Adrenal gland (tissue), 19 donors: ENCODE measurements at regions of chr9 and their contacts with region 1.

Region 1: DNA sequence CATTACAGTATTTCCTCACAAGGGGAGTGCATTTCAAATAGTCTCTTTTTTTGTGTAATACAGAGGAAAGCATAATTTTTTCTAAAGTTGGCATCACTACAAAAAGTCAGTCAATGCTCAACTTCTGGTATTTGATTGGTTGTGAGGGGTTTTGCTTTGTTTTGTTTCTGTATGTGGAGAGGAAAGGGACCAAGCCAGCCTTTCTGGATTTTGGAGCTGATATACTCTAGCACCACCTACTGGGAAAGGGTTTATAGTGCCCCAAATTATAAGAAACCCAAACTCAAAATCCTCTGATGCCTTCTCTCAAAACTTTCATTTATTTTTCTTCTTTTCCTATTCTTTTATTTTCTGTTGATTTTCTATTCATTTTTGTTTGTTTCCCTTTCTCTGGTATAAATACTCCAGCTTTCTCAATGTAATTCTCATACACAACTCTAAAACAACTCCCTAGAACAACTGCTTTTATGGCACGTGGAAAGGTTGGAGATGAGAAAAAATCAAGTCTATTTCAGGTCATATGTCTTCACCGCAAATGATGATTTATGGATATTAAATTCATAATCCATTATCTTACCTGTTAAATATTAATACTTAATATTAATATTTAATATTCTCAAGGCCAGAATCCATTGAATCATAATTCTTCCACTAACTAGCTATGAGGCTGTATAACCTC is 69.5 kb upstream of the ANXA1 start:
- DNase-seq: peak in 3 of 7 donors; percentile 21 to 26 (median 26)
- H3K4me3 ChIP-seq: no peak overlapping the region
- H3K27ac ChIP-seq: no peak overlapping the region
- H3K4me1 ChIP-seq: no peaks in the 10 kb centered on the region
- H3K27me3 ChIP-seq: no peaks in the 10 kb centered on the region
- CTCF ChIP-seq: peak; percentile 63 to 85 (median 74)
- POLR2A ChIP-seq: no peak

Region 2: DNA sequence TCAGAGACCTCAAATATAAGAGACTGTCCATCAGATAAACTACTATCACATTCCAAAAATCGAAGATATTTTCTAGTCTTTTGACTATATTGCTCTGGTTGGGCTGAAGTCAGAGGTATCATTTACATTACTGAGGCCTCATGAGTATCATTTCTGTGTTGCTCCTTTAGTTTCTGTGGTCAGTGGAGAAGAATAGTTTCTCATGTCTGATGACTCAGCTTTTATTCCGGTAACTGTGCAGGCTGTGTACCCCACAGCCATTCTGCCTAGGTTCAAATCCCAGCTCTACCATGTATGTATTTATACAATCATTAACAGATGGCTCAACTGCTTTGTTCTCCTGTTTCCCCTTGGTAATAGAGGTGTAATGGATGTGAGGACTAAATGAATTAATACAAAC is 308.5 kb before region 1 on chr9:
- intact Hi-C with region 1: no loop called
- DNase-seq: no peak
- H3K4me3 ChIP-seq: no peak overlapping the region
- H3K27ac ChIP-seq: no peak overlapping the region
- H3K4me1 ChIP-seq: no peaks in the 10 kb centered on the region
- H3K27me3 ChIP-seq: no peaks in the 10 kb centered on the region
- CTCF ChIP-seq: no peak
- POLR2A ChIP-seq: no peak

Region 3: DNA sequence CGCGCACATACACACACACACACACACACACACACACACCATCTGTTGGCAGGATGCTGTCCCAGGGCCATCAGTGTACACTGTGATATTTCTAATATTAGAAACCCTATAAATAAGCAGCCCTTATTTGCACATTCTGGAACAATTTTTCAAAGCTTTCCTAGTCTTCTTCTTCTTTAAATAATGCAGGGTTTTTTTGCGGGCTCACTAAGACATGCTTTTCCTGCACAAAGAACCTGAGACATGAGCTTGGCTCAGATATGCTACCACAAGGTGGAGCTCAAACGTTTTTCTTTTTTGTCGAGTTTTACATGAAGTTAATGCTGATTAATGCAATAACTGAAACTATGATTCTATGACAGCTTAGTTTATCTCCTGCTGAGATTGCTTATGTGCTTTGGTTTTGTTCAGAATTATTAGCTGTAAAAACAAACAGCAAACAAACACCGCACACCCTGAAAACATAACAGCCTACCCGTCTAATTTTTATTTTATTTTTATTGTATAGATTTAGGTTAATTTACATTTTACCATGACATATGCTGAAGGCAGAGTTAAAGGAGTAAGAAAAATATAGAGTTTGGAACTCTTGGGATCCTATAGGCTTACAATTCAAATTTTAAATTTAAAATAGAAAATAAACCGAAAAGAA is 225.0 kb before region 1 on chr9:
- intact Hi-C with region 1: loop called (anchors 10 kb)
- DNase-seq: peak in 6 of 7 donors; percentile 20 to 58 (median 45)
- H3K4me3 ChIP-seq: peak overlapping the region in 1 of 4 donors; percentile 25
- H3K27ac ChIP-seq: peak overlapping the region in 4 of 5 donors; percentile 53 to 82 (median 78)
- H3K4me1 ChIP-seq: peaks cover 15 to 26% of the 10 kb centered on the region in 2 donors
- H3K27me3 ChIP-seq: no peaks in the 10 kb centered on the region
- CTCF ChIP-seq: peak; percentile 44 to 78 (median 66)
- POLR2A ChIP-seq: no peak